GM10248 (cell line): ENCODE measurements at regions of chr2 and their contacts with region 1.

Region 1: GRCh38 chr2:64488050-64488974 is 34.4 kb downstream of the LGALSL start:
- DNase-seq: peak; percentile 76
- CTCF ChIP-seq: peak; percentile 97

Region 2: GRCh38 chr2:64338910-64339500 is 149.3 kb before region 1 on chr2:
- CTCF ChIA-PET with region 1: interaction called, 10 read pairs
- POLR2A ChIA-PET with region 1: no interaction called
- DNase-seq: no peak
- CTCF ChIP-seq: no peak

Region 3: DNA sequence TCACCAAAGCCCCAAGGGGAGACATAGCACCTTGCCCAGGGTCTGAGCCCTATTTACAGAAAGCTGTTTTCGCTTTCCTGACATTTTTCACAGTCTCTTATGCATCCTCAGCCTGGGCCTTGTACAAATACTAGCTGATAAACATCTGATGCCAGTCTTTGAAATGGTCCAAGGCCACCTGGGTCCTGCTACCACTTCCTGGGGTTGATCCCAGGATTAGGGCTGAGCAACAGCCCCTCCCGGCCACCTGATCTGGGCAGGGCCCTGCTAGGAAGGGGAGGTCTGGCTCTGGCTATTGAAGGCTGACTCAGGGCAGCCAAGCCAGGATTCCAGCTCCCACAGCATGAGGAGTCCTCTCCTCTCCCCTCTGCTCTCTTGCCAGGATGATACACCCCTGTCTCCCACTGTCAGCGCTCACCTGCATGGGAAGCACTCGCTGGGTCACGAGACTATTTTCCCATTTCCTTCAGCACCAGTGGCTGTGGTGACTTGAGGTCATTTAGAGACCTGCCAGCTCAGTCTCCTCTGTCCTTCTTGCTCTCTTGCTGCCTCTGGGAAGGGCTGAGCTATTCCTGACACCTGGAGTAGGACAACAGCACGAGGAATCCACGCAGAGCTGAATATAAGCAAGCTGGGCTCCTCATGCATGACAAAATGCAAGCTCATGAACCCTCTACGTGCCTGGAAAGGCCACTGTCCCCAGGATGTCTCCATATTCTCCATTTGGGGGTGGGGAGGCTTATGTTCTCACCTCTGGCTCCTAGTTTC is 87.4 kb before region 1 on chr2:
- CTCF ChIA-PET with region 1: interaction called, 25 read pairs
- POLR2A ChIA-PET with region 1: no interaction called
- DNase-seq: no peak
- CTCF ChIP-seq: no peak

Region 4: GRCh38 chr2:64455545-64455944 is 32.8 kb before region 1 on chr2:
- CTCF ChIA-PET with region 1: interaction called, 21 read pairs
- POLR2A ChIA-PET with region 1: no interaction called
- DNase-seq: no peak
- CTCF ChIP-seq: no peak

Region 5: DNA sequence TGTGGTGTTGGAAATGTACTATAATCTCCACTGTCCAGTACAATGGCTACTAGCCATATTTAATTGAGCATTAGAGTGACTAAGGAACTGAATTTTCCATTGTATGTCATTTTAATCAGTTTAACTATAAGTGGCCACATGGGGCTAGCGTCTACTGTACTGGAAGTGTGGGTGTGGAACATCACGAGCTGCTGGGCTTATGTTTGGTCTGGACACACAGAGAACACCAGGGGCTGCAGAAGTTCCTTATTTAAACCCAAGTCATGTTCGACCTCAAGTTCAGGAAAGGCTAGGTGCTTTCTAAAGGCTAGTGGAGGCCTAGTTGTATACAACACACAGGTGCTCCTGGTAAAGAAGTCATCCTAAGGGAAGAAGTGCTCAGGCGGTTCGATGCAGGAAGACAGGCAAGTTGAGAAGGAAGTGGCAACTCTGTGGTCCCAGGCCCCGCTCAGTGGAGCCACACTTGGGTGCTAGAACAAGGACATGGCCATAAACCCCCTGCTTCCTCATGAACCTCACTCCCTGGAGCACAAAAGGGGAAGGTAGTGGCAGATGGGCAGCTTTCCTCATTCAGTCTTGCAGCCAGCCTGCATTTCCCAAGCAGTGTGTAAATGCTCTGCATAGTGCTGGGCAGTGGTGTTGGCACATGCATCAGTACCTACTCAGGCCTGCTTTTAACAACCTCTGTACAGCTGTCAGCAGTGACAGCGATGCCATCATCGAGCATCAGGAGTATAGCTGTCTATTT is 21.0 kb before region 1 on chr2:
- CTCF ChIA-PET with region 1: interaction called, 98 read pairs
- POLR2A ChIA-PET with region 1: no interaction called
- DNase-seq: no peak
- CTCF ChIP-seq: no peak

Region 6: GRCh38 chr2:64504774-64505720 is 16.7 kb after region 1 on chr2:
- CTCF ChIA-PET with region 1: interaction called, 57 read pairs
- POLR2A ChIA-PET with region 1: no interaction called
- DNase-seq: no peak
- CTCF ChIP-seq: no peak

Region 7: DNA sequence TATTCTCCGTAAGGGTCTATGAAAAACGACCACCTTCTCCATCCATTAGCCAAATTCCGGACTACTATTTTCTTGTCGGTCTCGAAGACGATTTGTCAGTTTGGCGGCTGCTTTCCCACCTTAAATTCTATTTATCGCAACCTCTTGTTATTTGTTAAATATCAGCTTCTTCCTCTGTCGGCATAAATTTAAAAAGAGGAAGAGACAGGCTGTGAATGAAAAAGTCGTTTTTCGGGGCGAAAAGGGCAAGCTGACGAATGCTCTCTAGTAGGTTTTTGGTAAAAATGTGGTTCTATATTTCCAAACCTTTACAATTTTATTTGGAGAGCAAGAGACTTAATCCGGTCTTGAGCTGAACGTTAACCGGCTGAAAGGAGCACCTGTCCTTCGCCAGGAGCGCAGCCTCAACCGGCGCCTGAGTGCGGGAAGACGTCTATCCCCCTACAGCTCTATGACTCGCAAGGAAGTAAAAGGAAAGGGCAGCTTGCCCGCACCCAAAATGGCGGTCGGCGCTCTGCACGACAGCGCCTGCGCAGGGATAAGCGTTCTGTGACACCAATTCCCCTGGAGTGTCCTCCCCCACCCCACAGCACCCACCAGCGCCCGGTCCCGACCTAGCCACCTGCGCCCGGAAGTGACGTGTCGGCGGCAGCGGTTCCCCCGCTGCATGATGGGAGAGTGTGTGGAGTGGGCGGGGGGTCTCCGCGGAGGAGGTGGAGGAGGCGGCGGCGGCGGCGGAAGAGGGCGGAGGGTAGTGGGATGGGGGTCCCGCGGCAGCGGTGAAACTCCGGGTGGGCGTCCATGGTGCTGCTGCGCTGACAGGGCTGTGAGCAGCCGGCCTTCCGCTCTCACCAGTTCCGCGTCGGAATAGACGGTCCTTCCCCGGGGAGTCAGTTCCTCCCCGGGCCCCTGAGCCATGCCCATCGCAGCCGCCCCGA is 35.6 kb after region 1 on chr2 and contains the start of gene AFTPH:
- CTCF ChIA-PET with region 1: interaction called, 36 read pairs
- POLR2A ChIA-PET with region 1: no interaction called
- DNase-seq: peak; percentile 98
- CTCF ChIP-seq: no peak

Region 8: DNA sequence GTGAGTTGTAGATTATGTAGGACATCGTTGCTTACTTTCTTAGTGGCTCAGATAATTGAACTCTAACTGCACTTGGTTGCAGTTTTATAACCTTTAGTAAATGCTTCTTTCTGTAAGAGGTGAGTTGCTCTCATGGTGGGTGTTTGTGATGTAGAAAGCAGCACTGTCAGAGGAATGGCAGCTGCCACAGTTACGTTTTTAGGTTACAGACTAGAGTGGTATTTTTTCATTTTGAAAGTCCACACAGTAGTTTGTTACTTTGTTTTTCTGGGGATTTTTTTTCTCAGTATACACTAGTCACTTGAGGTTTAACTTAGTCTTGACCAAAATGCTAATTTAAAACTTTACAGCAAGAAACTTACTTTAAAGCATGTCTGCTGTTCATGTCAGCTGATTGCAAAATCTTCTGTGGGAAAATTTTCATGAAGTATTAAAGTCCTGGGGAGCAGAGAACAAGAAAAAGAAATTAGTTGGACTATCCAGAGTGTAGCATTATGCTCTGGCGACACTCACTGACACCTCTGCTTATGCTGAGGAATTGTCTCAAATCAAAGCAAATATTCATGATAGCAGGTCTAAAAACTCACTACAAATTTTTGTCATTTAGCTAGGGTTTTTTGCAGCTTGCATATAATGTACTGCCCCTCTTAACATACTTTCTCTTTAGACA is 50.6 kb after region 1 on chr2:
- CTCF ChIA-PET with region 1: no interaction called
- POLR2A ChIA-PET with region 1: no interaction called
- DNase-seq: no peak
- CTCF ChIP-seq: no peak